BJ (cell line): ENCODE measurements at regions of chr16 and their contacts with region 1.

Region 1: GRCh38 chr16:68116256-68116867 is 31.2 kb downstream of the NFATC3 start:
- DNase-seq: no peak
- H3K4me3 ChIP-seq: no peak overlapping the region
- H3K27me3 ChIP-seq: no peaks in the 10 kb centered on the region
- CTCF ChIP-seq: peak; percentile 57

Region 2: DNA sequence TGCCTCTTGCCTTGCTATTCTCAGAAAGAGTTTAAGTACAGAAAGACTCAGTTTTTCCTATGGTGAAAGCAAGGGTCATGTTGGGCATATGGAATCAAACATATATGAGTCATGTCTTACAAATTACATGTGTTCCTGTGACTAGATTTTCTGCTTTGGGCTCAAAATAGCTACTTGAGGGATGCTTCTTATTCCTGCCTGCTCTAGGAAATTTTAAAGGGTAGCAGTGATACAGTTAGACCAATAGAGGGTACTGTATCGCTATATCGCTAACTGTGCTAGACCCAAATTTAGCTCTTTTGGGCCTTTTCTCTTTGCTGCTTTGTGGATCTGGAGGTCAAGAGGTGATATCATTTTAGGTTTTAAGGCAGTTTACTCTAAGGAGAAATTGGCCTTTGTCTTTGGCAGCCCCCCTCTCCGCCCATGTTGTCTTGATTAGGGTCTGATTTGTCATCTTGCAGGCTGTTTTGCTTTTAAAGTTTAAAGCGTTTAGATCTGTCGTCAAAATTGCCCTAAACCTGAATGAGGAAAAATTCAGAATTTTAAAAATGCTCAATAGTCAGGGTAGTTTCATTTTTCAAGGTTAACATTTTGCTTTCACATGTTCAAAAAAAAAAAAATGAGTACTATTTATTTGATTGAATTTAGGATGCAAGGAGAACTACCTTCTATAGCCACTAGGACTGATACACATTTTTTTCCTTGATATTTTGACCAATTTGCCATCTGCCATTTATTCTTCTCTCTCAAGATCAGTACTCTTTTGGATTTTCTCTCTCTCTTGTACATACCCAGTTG is 22.3 kb before region 1 on chr16:
- CTCF ChIA-PET with region 1: interaction called, 10 read pairs
- POLR2A ChIA-PET with region 1: no interaction called
- DNase-seq: no peak
- H3K4me3 ChIP-seq: no peak overlapping the region
- H3K27me3 ChIP-seq: no peaks in the 10 kb centered on the region
- CTCF ChIP-seq: peak; percentile 62

Region 3: DNA sequence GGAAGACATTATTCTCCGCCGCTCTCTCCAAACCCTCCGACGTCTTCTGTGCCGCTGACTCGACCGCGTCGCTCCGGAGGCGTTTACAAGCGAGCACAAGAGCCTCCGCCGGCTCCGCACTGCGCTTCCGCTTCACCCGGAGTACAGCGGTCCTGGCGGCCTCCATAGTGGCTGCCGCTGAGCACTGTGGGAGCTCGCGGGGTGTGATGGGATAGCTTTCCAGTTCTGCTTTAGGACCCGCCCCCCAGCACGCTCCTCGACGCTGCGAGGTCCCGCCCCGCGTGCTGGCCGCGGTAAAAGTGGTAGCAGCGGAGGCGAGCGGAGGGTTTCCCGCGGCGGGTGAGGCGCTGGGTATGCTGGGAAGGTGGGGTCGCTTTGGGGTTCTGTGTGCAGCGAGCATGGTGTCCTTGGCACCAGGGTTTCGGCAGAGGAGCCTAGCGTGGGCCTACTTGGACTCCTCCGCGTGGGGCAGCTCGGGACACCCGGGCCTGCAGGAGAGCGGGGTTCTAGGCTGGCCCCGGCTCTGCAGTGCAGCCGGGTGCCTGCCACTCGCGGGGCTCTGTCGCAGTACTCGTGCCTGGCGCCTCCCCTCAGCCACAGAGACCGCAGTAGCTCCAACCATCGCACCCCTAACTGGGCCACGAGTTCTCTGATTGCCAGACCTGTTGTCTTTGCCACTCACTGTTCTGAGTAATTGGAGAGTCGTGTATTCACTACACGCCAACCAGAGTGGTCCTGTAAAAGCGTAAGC is 194.6 kb after region 1 on chr16 and contains the starts of genes PRMT7 and SLC7A6OS:
- CTCF ChIA-PET with region 1: no interaction called
- POLR2A ChIA-PET with region 1: interaction called, 10 read pairs
- DNase-seq: no peak
- H3K4me3 ChIP-seq: peak within 1 kb of the TSS; percentile 98
- H3K27me3 ChIP-seq: no peaks in the 10 kb centered on the region
- CTCF ChIP-seq: peak; percentile 32
- polyA plus RNA-seq, gene PRMT7: 24.0 and 40.0 TPM in 2 replicates
- polyA plus RNA-seq, gene SLC7A6OS: 5.3 and 6.9 TPM in 2 replicates